Gastrocnemius medialis (tissue), 4 donors: ENCODE measurements at regions of chr7 and their contacts with region 1.

Region 1: GRCh38 chr7:155721056-155721455 is 76.6 kb downstream of the RBM33 start:
- DNase-seq: no peak
- ATAC-seq: no peak
- H3K4me3 ChIP-seq: no peak overlapping the region
- H3K27ac ChIP-seq: no peak overlapping the region
- H3K4me1 ChIP-seq: peaks cover 8 to 11% of the 10 kb centered on the region in 2 donors
- H3K27me3 ChIP-seq: no peaks in the 10 kb centered on the region
- CTCF ChIP-seq: no peak
- POLR2A ChIP-seq: no peak

Region 2: DNA sequence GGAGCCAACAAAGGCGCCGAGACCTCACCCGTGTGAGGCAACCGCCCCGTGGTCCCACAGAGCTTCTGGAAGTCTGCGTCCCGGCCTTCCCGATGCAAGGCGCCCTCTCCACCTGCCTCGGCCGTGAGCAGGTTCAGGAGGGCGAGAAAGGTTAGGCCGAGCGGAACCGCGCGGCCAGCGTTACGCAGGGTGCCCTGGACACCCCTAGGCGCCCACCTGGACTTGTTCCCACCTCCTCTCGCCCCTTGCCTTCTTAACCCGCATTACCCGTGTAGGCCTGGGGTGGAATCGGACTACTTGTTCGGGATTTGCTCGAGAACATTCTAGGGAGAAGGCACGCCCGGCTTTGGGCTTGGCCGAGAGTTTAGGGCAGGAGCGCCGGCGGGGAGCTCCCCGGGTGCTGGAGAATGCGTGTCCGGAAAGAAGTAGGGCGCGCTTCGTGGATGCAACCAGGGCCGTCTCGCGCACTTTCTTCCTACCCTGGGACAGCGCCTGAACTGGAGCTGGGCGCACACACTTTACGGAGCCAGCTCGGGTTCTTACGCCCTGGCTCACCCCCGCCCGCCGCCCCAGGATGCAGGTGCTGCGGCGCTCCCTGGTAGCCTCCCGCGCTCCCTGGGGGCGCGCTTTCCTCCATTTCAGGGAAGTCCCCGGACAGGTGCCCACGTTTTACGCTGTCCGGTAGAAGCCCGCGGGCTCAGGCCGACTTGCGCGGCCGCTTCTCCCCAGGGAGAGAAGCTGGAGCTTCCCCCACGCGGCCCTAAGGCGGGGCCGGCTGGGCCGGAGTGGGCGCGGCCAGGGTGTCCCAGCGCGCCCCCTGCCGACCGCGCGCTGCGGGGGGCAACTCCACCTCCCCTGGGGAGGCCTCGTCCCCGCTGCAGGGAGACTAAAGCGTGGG is 348.9 kb before region 1 on chr7:
- in situ Hi-C with region 1: no loop called
- intact Hi-C with region 1: no loop called
- DNase-seq: no peak
- ATAC-seq: peak; percentile 39 to 61
- H3K4me3 ChIP-seq: peak overlapping the region; percentile 21 to 52 (median 32)
- H3K27ac ChIP-seq: no peak overlapping the region
- H3K4me1 ChIP-seq: peaks cover 10 to 28% of the 10 kb centered on the region in 2 donors
- H3K27me3 ChIP-seq: peaks cover 70 to 76% (median 73%) of the 10 kb centered on the region in 3 donors
- CTCF ChIP-seq: peak in 4 of 5 experiments; percentile 34 to 52 (median 43)
- POLR2A ChIP-seq: no peak

Region 3: DNA sequence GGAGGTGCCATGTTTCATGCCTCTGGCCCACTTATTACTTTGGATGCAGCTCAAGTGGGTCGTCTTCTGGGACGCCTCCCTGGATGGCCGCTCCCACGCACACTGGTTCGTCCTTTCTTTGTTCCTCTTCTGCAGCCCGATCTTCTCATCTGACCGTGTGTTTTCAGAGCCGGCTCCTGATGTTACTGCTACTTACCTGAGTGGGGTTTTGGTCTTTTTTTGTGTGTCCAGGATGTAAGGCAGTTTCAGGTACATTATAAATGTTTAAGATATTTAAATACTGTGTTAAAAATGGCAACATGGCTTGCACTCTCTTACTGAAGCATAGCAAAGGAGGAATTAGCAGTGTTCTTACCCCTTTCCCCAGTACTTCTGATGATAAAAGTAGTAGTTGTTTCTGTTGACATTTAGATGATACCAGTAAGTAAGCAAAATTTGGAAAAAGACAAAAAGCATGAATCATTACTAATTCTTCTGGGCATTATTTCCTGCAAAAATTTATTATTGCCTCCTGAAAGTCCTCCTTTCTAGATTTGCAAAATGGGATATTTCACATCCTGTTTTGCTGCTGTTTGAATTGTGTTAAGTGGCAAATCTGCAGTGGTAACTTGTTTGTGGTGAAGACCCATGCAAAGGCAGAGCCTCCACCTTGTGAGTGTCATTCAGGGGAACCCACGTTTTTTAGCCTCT is 31.8 kb after region 1 on chr7:
- in situ Hi-C with region 1: no loop called
- intact Hi-C with region 1: loop called (anchors 1 kb)
- DNase-seq: no peak
- ATAC-seq: no peak
- H3K4me3 ChIP-seq: no peak overlapping the region
- H3K27ac ChIP-seq: no peak overlapping the region
- H3K4me1 ChIP-seq: peaks cover 59 to 64% of the 10 kb centered on the region in 2 donors
- H3K27me3 ChIP-seq: no peaks in the 10 kb centered on the region
- CTCF ChIP-seq: no peak
- POLR2A ChIP-seq: no peak